Calu3 (cell line): ENCODE measurements at regions of chr6 and their contacts with region 1.

Region 1: DNA sequence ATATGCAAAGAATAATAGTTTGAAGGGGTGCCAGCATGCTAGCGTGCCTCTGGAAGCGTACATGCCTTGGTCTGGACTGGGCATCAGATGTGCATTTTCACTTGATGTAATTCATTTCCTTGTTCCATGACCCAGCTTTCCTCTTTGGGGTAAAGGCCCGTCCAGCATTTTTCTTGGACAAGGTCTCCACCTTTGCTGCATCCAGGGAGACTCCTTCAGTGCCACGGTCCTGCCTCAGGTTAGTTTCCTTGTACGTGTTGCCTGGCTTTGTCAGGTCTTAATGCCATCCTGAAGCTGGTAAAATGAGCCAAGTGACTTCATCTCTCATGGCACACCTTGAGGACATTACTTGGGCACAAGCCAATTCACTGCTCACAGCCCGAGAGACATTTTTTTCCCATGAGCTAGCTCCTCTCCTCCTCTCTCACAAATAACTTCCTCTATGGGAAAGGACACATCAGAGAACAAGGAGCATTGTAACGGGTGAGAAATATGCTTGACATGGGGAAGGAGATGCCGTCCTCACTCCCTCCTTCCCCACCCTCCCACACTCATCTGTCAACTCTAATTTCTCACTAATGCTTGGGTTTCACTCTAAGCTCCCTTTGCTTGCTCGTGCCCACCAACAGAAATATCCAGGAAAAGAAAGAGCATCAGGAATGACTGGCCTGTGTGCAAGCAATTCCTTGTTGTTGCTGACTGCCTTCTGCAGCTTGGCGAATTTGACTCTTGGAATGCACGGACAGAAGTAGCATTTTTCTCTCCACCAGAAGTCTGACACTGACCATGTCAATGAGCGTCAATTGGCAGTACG is 24.0 kb downstream of the EDN1 start:
- DNase-seq: peak; percentile 77
- H3K4me3 Mint-ChIP-seq: peak overlapping the region; percentile 44
- H3K27ac Mint-ChIP-seq: peak overlapping the region; percentile 94
- H3K4me1 Mint-ChIP-seq: peaks cover 37% of the 10 kb centered on the region
- H3K27me3 Mint-ChIP-seq: no peaks in the 10 kb centered on the region
- CTCF ChIP-seq: no peak

Region 2: DNA sequence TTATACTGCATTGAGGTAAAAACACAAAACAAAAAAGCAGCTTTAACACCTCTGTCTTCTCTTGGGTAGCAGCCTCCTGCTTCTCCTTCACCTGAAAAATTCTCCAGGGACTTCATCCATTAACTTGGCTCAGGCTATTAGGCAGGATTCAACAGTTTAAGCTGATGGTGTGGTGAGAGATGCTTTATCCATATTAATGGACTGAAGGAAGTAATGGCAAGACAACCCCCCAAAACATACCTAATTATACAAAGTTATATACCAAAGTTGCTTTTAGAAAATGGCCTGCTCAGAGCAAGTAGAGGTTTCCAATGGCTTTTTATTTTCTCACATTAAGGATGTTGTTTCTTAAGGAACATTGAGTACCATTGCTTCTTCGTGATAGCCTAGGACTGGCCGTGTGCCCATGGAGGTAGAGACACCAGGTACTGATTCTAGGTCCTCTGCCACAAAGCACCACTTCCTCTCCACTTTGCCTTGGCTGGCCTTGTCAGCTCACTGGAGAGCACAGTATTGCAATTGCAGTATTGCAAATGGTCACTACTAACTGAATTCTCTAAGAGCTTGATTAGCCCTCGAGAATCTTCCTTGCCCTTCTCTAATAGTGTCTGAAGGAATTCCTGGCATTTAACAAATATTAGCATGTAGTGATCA is 16.7 kb before region 1 on chr6:
- CTCF ChIA-PET with region 1: interaction called, 21 read pairs
- intact Hi-C with region 1: no loop called
- DNase-seq: no peak
- H3K4me3 Mint-ChIP-seq: peak overlapping the region; percentile 39
- H3K27ac Mint-ChIP-seq: peak overlapping the region; percentile 62
- H3K4me1 Mint-ChIP-seq: peaks cover 53% of the 10 kb centered on the region
- H3K27me3 Mint-ChIP-seq: no peaks in the 10 kb centered on the region
- CTCF ChIP-seq: no peak

Region 3: GRCh38 chr6:12331956-12332749 is 18.0 kb after region 1 on chr6:
- CTCF ChIA-PET with region 1: interaction called, 19 read pairs
- intact Hi-C with region 1: no loop called
- DNase-seq: peak; percentile 47
- H3K4me3 Mint-ChIP-seq: peak overlapping the region; percentile 24
- H3K27ac Mint-ChIP-seq: peak overlapping the region; percentile 92
- H3K4me1 Mint-ChIP-seq: peaks cover 46% of the 10 kb centered on the region
- H3K27me3 Mint-ChIP-seq: no peaks in the 10 kb centered on the region
- CTCF ChIP-seq: no peak

Region 4: GRCh38 chr6:12363651-12364381 is 49.6 kb after region 1 on chr6:
- CTCF ChIA-PET with region 1: interaction called, 3 read pairs
- intact Hi-C with region 1: loop called (anchors 1 kb)
- DNase-seq: peak; percentile 62
- H3K4me3 Mint-ChIP-seq: peak overlapping the region; percentile 52
- H3K27ac Mint-ChIP-seq: peak overlapping the region; percentile 97
- H3K4me1 Mint-ChIP-seq: peaks cover 44% of the 10 kb centered on the region
- H3K27me3 Mint-ChIP-seq: no peaks in the 10 kb centered on the region
- CTCF ChIP-seq: no peak

Region 5: GRCh38 chr6:12545619-12546409 is 231.6 kb after region 1 on chr6:
- CTCF ChIA-PET with region 1: no interaction called
- intact Hi-C with region 1: loop called (anchors 5 kb)
- DNase-seq: peak; percentile 27
- H3K4me3 Mint-ChIP-seq: no peak overlapping the region
- H3K27ac Mint-ChIP-seq: peak overlapping the region; percentile 83
- H3K4me1 Mint-ChIP-seq: peaks cover 35% of the 10 kb centered on the region
- H3K27me3 Mint-ChIP-seq: no peaks in the 10 kb centered on the region
- CTCF ChIP-seq: no peak